CD4-positive, alpha-beta memory T cell (primary cell): ENCODE measurements at regions of chr11 and their contacts with region 1.

Region 1: GRCh38 chr11:93543292-93543977 is at the start of gene SMCO4:
- DNase-seq: peak; percentile 58 to 70 (median 59)
- H3K4me3 ChIP-seq: peak within 1 kb of the TSS; percentile 39 to 54
- H3K4me3 Mint-ChIP-seq: peak within 1 kb of the TSS; percentile 88 to 96 (median 92)
- H3K27ac ChIP-seq: peak within 1 kb of the TSS; percentile 41
- H3K27ac Mint-ChIP-seq: peak within 1 kb of the TSS; percentile 79 to 93 (median 88)
- H3K4me1 ChIP-seq: peaks cover 13% of the 10 kb centered on the region
- H3K4me1 Mint-ChIP-seq: peaks cover 21 to 37% (median 29%) of the 10 kb centered on the region in 4 donors
- H3K27me3 ChIP-seq: no peaks in the 10 kb centered on the region
- H3K27me3 Mint-ChIP-seq: peaks cover 0 to 3% of the 10 kb centered on the region in 2 donors
- total RNA-seq, gene SMCO4: 14.5 to 14.7 TPM

Region 2: DNA sequence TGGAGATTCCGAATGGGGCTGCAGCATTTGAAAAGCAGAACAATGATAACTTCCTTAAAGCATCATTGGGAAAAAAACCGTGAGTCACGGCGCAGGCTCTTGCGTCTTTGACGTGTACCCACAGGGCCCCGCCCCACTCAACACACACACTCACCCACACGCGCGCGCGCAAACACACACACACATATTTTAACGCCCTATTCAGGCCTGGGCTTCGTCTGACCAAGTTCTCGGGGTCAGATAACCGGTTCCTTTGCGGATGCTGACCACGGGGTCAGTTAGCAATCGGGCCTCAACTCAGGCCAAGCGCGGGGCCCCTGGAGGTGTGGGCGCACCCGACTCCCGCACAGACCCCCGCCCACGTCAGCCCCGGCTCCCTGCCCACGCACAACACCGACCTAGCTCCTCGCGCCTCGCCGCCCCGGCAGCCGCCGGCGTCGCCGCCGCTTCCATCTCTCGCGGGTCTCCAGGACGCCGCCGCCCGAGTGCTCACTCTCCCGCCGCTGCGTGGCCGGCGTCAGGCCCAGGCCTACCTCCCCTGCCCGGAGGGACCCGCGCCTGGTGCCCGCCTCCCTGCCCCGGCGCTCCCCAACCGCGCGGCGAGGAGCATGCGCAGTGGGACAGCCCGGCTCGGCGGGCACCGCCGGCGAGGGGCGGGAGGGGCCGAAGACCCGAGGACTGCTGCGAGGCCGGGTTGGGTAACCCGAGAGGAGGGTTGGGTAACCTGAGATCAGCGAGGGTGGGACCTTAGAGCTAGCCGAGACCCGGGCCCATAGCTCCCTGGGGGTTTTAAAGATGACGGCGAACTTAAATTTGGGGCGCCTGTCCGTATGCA is 345.8 kb before region 1 on chr11 and contains the start of gene SLC36A4:
- CTCF ChIA-PET with region 1: no interaction called
- POLR2A ChIA-PET with region 1: interaction called, 4 read pairs
- intact Hi-C with region 1: loop called (anchors 2 kb)
- DNase-seq: peak; percentile 86 to 90 (median 88)
- H3K4me3 ChIP-seq: peak within 1 kb of the TSS; percentile 59 to 61
- H3K4me3 Mint-ChIP-seq: peak within 1 kb of the TSS; percentile 92 to 99 (median 96)
- H3K27ac ChIP-seq: peak within 1 kb of the TSS; percentile 92
- H3K27ac Mint-ChIP-seq: peak within 1 kb of the TSS; percentile 96 to 99 (median 98)
- H3K4me1 ChIP-seq: no peaks in the 10 kb centered on the region
- H3K4me1 Mint-ChIP-seq: peaks cover 15 to 34% (median 23%) of the 10 kb centered on the region in 4 donors
- H3K27me3 ChIP-seq: no peaks in the 10 kb centered on the region
- H3K27me3 Mint-ChIP-seq: peaks cover 0 to 3% of the 10 kb centered on the region in 2 donors
- total RNA-seq, gene SLC36A4: 15.4 to 21.5 TPM

Region 3: GRCh38 chr11:93234602-93235207 is 308.7 kb before region 1 on chr11:
- CTCF ChIA-PET with region 1: interaction called, 34 read pairs
- POLR2A ChIA-PET with region 1: interaction called, 4 read pairs
- intact Hi-C with region 1: loop called (anchors 1 kb)
- DNase-seq: peak; percentile 53 to 63 (median 59)
- H3K4me3 ChIP-seq: no peak overlapping the region
- H3K4me3 Mint-ChIP-seq: no peak overlapping the region
- H3K27ac ChIP-seq: no peak overlapping the region
- H3K27ac Mint-ChIP-seq: no peak overlapping the region
- H3K4me1 ChIP-seq: no peaks in the 10 kb centered on the region
- H3K4me1 Mint-ChIP-seq: no peaks in the 10 kb centered on the region
- H3K27me3 ChIP-seq: no peaks in the 10 kb centered on the region
- H3K27me3 Mint-ChIP-seq: peaks cover 9 to 10% of the 10 kb centered on the region in 2 donors

Region 4: DNA sequence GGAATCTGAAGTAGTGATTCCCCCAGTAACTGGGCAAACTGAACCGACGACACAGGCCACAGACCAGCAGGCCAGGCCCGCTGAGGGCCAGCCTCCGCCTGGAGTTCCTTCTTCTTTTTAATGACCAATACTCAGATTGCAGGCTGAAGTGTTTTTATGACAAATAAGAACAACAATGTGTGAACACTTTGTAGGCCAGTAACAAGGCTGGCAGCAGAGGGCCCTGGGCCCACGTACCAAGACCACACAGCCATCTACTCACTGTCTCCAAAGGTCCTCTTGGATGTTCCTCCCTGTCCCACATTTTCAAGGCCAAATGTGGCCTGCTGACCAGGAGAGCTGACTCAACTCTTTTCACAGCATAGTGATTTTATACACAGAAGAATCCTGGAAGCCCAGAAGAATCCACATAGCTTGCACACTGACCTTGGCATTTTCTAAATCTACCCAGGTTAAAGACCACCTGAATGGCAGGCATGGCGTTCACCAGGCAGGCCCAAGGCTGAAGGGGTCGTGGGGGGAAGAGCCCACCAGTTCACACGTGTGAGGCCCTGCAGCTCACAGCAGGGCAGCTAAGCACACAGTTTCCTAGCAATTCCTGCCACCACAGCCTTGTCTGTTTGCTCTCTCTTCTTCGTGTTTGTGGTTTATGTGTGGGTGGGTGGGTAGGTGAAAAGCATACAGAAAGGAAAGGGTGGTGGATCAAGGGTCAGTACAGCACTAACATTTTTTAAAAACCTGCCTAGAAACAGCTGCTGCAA is 13.5 kb before region 1 on chr11:
- CTCF ChIA-PET with region 1: interaction called, 11 read pairs
- POLR2A ChIA-PET with region 1: interaction called, 17 read pairs
- intact Hi-C with region 1: no loop called
- DNase-seq: no peak
- H3K4me3 ChIP-seq: no peak overlapping the region
- H3K4me3 Mint-ChIP-seq: peak overlapping the region in 7 of 8 donors; percentile 22 to 79 (median 43)
- H3K27ac ChIP-seq: no peak overlapping the region
- H3K27ac Mint-ChIP-seq: peak overlapping the region; percentile 8 to 90 (median 85)
- H3K4me1 ChIP-seq: peaks cover 72% of the 10 kb centered on the region
- H3K4me1 Mint-ChIP-seq: peaks cover 45 to 76% (median 65%) of the 10 kb centered on the region in 4 donors
- H3K27me3 ChIP-seq: no peaks in the 10 kb centered on the region
- H3K27me3 Mint-ChIP-seq: no peaks in the 10 kb centered on the region

Region 5: GRCh38 chr11:93652161-93652597 is 108.7 kb after region 1 on chr11:
- CTCF ChIA-PET with region 1: interaction called, 4 read pairs
- POLR2A ChIA-PET with region 1: no interaction called
- intact Hi-C with region 1: loop called (anchors 2 kb)
- DNase-seq: peak in 4 of 5 donors; percentile 42 to 48 (median 46)
- H3K4me3 ChIP-seq: no peak overlapping the region
- H3K4me3 Mint-ChIP-seq: no peak overlapping the region
- H3K27ac ChIP-seq: no peak overlapping the region
- H3K27ac Mint-ChIP-seq: no peak overlapping the region
- H3K4me1 ChIP-seq: no peaks in the 10 kb centered on the region
- H3K4me1 Mint-ChIP-seq: peaks cover 0 to 7% (median 6%) of the 10 kb centered on the region in 4 donors
- H3K27me3 ChIP-seq: no peaks in the 10 kb centered on the region
- H3K27me3 Mint-ChIP-seq: peaks cover 3 to 11% of the 10 kb centered on the region in 2 donors

Region 6: DNA sequence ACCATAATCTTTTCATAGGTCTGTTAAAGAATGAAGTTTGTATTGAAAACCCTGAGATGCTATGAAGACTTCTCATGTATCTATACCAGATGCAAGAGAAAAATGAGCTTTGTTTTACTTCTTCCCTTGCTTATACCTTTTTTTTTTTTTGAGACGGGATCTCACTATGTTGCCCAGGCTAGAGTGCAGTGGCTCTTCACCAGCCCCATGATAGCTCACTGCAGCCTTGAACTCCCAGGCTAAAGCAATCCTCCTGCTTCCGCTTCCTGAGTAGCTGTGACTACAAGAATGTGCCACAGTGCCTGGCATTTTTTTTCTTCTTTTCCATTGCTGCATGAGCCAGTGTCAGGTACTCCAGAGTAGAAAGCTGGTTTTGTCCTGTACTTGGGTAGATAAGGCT is 128.8 kb after region 1 on chr11:
- CTCF ChIA-PET with region 1: no interaction called
- POLR2A ChIA-PET with region 1: no interaction called
- intact Hi-C with region 1: no loop called
- DNase-seq: no peak
- H3K4me3 ChIP-seq: no peak overlapping the region
- H3K4me3 Mint-ChIP-seq: no peak overlapping the region
- H3K27ac ChIP-seq: no peak overlapping the region
- H3K27ac Mint-ChIP-seq: peak overlapping the region in 4 of 7 donors; percentile 6 to 43 (median 12)
- H3K4me1 ChIP-seq: no peaks in the 10 kb centered on the region
- H3K4me1 Mint-ChIP-seq: peaks cover 0 to 8% (median 5%) of the 10 kb centered on the region in 4 donors
- H3K27me3 ChIP-seq: no peaks in the 10 kb centered on the region
- H3K27me3 Mint-ChIP-seq: no peaks in the 10 kb centered on the region

Region 7: GRCh38 chr11:93784152-93784934 is 240.9 kb after region 1 on chr11 and contains the start of gene MED17:
- CTCF ChIA-PET with region 1: no interaction called
- POLR2A ChIA-PET with region 1: interaction called, 5 read pairs
- intact Hi-C with region 1: loop called (anchors 5 kb)
- DNase-seq: peak; percentile 84 to 91 (median 85)
- H3K4me3 ChIP-seq: peak within 1 kb of the TSS; percentile 93 to 94
- H3K4me3 Mint-ChIP-seq: peak within 1 kb of the TSS; percentile 93 to 100 (median 98)
- H3K27ac ChIP-seq: peak within 1 kb of the TSS; percentile 84
- H3K27ac Mint-ChIP-seq: peak within 1 kb of the TSS; percentile 68 to 99 (median 97)
- H3K4me1 ChIP-seq: peaks cover 37% of the 10 kb centered on the region
- H3K4me1 Mint-ChIP-seq: peaks cover 27 to 45% (median 36%) of the 10 kb centered on the region in 4 donors
- H3K27me3 ChIP-seq: no peaks in the 10 kb centered on the region
- H3K27me3 Mint-ChIP-seq: no peaks in the 10 kb centered on the region
- total RNA-seq, gene MED17: 73.2 to 78.5 TPM

Region 8: GRCh38 chr11:94134651-94135512 is 591.4 kb after region 1 on chr11:
- CTCF ChIA-PET with region 1: no interaction called
- POLR2A ChIA-PET with region 1: no interaction called
- intact Hi-C with region 1: loop called (anchors 10 kb)
- DNase-seq: no peak
- H3K4me3 ChIP-seq: no peak overlapping the region
- H3K4me3 Mint-ChIP-seq: peak overlapping the region in 2 of 8 donors; percentile 20 to 33
- H3K27ac ChIP-seq: no peak overlapping the region
- H3K27ac Mint-ChIP-seq: peak overlapping the region in 6 of 7 donors; percentile 3 to 69 (median 37)
- H3K4me1 ChIP-seq: peaks cover 58% of the 10 kb centered on the region
- H3K4me1 Mint-ChIP-seq: peaks cover 34 to 51% (median 44%) of the 10 kb centered on the region in 4 donors
- H3K27me3 ChIP-seq: no peaks in the 10 kb centered on the region
- H3K27me3 Mint-ChIP-seq: no peaks in the 10 kb centered on the region